ENCODE measurements at regions of chr2 and their contacts with region 1.

Region 1: GRCh38 chr2:219543601-219544358 is at the starts of genes CHPF and TMEM198:
- DNase-seq: peak; percentile 99
- ATAC-seq: peak; percentile 91 to 92
- total RNA-seq, gene CHPF: 72.4 to 113 TPM
- total RNA-seq, gene TMEM198: 3.2 to 4.1 TPM

Region 2: DNA sequence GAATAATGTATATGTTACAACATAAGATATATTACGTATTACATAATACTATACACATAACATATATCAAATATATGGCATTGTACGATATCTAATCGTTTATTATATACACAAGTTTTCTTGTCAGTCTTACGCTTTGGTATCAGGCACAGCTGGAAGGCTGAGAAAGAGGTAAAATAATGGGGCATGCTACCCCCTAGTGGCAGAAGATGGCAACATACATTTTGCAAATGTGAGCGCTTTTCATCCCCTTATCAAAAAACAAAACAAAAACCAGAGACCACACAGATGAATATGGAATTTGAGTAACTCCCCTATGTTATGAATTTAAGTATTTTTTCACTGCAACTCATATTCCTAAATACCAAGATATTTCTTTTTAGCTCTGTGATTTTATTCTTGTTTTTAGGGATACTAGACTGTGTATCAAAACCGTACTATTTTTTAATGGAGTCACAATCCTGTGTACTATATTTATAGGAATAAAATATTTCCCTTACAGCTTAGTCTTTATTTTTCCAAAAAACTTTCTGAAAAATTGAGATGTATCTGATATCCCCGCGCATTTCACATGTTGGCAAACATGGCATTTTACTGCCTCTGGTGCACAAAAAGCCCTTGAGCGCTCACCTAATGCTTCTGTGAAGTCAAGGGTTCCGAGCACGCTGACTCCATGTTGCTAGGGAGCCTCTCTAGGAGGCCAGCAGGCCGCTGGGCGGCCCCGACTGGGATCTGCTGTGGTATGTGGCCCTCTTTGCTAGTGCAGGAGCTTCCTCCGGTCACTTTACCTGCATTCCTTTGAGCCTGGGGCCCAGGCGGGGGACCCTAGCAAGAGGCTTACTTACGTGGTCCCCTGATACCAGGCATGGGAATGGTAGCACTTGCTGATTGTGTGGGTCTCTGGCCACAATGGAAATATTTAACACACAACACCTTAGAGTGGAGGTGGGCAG is 146.2 kb after region 1 on chr2:
- intact Hi-C with region 1: loop called (anchors 5 to 10 kb)
- DNase-seq: no peak
- ATAC-seq: peak; percentile 54 to 59